ENCODE measurements at regions of chr3 and their contacts with region 1.

Region 1: GRCh38 chr3:102525624-102526023 is 90.8 kb downstream of the ZPLD1 start:
- DNase-seq: no peak
- ATAC-seq: no peak
- H3K4me3 Mint-ChIP-seq: no peak overlapping the region
- H3K27ac Mint-ChIP-seq: no peak overlapping the region
- H3K4me1 Mint-ChIP-seq: no peaks in the 10 kb centered on the region
- H3K27me3 Mint-ChIP-seq: peaks cover 9% of the 10 kb centered on the region
- CTCF ChIP-seq: no peak

Region 2: DNA sequence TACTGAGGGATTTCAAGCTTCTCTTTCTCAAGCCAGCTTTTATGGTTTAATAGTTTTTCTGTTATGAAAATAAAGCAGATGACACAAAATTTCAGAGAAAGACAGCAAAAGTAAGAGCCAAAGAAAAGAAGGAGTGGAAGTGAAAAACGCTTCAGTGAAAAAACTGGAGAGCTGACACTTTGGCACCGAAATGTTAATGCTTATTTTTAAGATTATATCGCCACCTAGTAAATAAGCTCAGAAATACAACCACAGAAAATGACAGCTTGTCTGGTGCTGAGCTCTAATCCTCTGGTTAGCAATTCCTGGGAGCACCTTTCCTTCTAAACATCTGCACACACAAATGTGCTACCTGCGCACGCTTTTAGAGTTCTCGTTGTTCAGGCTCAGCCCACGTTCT is 10.8 kb after region 1 on chr3:
- CTCF ChIA-PET with region 1: interaction called, 17 read pairs
- POLR2A ChIA-PET with region 1: no interaction called
- intact Hi-C with region 1: no loop called
- DNase-seq: no peak
- ATAC-seq: no peak
- H3K4me3 Mint-ChIP-seq: no peak overlapping the region
- H3K27ac Mint-ChIP-seq: no peak overlapping the region
- H3K4me1 Mint-ChIP-seq: no peaks in the 10 kb centered on the region
- H3K27me3 Mint-ChIP-seq: peaks cover 8% of the 10 kb centered on the region
- CTCF ChIP-seq: peak; percentile 29

Region 3: GRCh38 chr3:102712896-102713295 is 187.3 kb after region 1 on chr3:
- CTCF ChIA-PET with region 1: no interaction called
- POLR2A ChIA-PET with region 1: no interaction called
- intact Hi-C with region 1: no loop called
- DNase-seq: peak; percentile 24
- ATAC-seq: peak; percentile 67
- H3K4me3 Mint-ChIP-seq: no peak overlapping the region
- H3K27ac Mint-ChIP-seq: no peak overlapping the region
- H3K4me1 Mint-ChIP-seq: peaks cover 9% of the 10 kb centered on the region
- H3K27me3 Mint-ChIP-seq: no peaks in the 10 kb centered on the region
- CTCF ChIP-seq: no peak

Measured in activated CD8-positive, alpha-beta T cell treated with anti-CD3 and anti-CD28 coated beads for 36 hours (primary cell).